ENCODE measurements at regions of chr12 and their contacts with region 1.

Region 1: DNA sequence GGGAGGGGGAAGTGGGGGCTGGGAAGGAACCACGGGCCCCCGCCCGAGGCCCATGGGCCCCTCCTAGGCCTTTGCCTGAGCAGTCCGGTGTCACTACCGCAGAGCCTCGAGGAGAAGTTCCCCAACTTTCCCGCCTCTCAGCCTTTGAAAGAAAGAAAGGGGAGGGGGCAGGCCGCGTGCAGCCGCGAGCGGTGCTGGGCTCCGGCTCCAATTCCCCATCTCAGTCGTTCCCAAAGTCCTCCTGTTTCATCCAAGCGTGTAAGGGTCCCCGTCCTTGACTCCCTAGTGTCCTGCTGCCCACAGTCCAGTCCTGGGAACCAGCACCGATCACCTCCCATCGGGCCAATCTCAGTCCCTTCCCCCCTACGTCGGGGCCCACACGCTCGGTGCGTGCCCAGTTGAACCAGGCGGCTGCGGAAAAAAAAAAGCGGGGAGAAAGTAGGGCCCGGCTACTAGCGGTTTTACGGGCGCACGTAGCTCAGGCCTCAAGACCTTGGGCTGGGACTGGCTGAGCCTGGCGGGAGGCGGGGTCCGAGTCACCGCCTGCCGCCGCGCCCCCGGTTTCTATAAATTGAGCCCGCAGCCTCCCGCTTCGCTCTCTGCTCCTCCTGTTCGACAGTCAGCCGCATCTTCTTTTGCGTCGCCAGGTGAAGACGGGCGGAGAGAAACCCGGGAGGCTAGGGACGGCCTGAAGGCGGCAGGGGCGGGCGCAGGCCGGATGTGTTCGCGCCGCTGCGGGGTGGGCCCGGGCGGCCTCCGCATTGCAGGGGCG is at the start of gene GAPDH:
- DNase-seq: peak; percentile 96 to 98
- H3K4me3 ChIP-seq: peak within 1 kb of the TSS; percentile 97
- H3K27ac ChIP-seq: peak within 1 kb of the TSS; percentile 83
- H3K4me1 ChIP-seq: peaks cover 56% of the 10 kb centered on the region
- H3K27me3 ChIP-seq: no peaks in the 10 kb centered on the region
- CTCF ChIP-seq: no peak
- total RNA-seq, gene GAPDH: 6,143 and 8,169 TPM in 2 replicates

Region 2: GRCh38 chr12:6215932-6216494 is 318.1 kb before region 1 on chr12:
- CTCF ChIA-PET with region 1: no interaction called
- POLR2A ChIA-PET with region 1: no interaction called
- intact Hi-C with region 1: loop called (anchors 10 kb)
- DNase-seq: peak; percentile 99 to 100
- H3K4me3 ChIP-seq: peak overlapping the region; percentile 32; the same call in 1 of the 2 replicates
- H3K27ac ChIP-seq: peak overlapping the region; percentile 95
- H3K4me1 ChIP-seq: peaks cover 86% of the 10 kb centered on the region
- H3K27me3 ChIP-seq: no peaks in the 10 kb centered on the region
- CTCF ChIP-seq: no peak

Region 3: GRCh38 chr12:6335451-6336078 is 198.5 kb before region 1 on chr12:
- CTCF ChIA-PET with region 1: interaction called, 3 read pairs
- POLR2A ChIA-PET with region 1: interaction called, 22 read pairs
- intact Hi-C with region 1: loop called (anchors 1 kb)
- DNase-seq: peak; percentile 76
- H3K4me3 ChIP-seq: peak overlapping the region; percentile 49
- H3K27ac ChIP-seq: peak overlapping the region; percentile 95
- H3K4me1 ChIP-seq: peaks cover 82% of the 10 kb centered on the region
- H3K27me3 ChIP-seq: no peaks in the 10 kb centered on the region
- CTCF ChIP-seq: peak; percentile 53; the same call in 1 of the 2 replicates

Region 4: DNA sequence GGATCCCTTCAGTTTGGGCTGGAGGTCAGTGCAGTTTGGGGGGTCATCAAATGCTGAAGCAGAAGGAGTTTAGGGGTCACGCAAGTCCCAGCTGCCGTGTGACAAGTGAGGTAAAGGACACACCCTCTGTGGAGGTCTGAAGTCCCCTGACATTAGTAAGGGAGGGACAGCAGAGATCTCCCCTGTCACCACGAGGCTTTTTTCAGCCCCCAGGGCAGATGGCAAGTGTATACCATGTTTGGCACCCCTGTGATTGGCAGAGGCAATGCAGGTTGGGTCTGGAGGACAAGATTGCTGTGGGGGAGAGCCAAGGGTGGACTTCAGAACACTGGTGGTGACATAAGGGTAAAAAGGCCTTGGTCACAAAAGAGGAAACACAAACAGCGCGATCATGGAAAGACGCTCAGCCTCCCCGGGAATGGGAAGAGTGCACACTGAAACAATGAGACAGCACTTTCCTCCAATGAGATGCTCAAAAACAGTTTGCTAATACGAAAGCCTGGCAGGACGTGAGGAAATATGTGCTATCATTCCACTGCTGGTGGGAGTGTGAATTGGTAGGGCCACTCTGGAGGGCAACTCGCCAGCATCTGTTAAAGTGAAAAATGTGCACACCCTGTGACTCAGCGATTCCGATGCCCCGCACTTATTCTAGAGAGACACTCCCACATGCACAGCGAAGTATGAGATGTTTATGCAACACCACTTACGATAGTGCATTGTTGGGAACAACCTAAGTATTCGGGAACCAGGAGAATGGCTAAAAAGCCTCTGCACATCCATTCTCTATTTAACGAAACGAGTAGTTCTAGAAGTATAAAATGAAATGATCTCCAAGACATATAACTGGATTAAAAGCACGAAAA is 103.8 kb before region 1 on chr12:
- CTCF ChIA-PET with region 1: no interaction called
- POLR2A ChIA-PET with region 1: no interaction called
- intact Hi-C with region 1: loop called (anchors 1 kb)
- DNase-seq: peak; percentile 97 to 98
- H3K4me3 ChIP-seq: peak overlapping the region; percentile 37
- H3K27ac ChIP-seq: peak overlapping the region; percentile 98
- H3K4me1 ChIP-seq: peaks cover 29% of the 10 kb centered on the region
- H3K27me3 ChIP-seq: no peaks in the 10 kb centered on the region
- CTCF ChIP-seq: no peak

Region 5: DNA sequence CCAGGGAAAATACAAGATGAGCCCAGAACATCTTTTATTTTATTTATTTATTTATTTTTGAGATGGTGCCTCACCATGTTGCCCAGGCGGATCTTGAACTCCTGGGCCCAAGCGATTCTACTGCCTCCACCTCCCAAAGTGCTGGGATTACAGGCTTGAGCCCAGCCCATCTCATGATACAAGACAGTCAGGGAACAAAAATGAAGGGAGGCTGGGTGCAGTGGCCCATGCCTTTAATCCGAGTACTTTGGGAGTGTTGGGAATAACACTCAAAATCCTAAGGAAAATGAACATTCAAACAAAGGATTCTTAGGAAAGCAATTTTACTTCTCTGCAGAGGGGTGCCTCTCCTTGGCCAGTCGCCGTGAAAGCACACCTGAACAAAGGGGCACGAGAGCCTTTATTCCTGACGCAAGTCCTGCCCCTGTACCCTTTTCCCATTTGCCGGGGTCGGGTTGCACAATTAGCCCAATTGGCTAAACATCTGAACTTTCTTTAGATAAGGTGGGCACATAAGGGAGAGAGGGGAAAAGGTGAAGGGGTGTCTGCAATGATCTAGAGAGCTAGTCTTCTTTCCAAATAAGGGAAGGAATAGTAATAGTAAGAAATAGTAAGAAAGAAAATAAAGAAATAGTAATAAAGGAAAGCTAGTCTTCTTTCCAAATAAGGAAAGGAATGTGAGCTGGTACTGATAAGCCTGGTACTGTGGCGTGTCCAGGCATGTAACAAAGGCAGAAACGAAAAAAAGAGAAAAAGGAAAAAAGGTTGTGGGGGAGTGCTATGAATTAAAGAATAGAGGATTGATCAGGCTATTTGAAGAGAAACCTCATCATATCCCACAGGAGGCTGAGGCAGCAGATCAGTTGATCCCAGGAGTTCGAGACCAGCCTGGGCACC is 26.8 kb before region 1 on chr12:
- CTCF ChIA-PET with region 1: interaction called, 4 read pairs
- POLR2A ChIA-PET with region 1: interaction called, 13 read pairs
- intact Hi-C with region 1: no loop called
- DNase-seq: no peak
- H3K4me3 ChIP-seq: no peak overlapping the region
- H3K27ac ChIP-seq: no peak overlapping the region
- H3K4me1 ChIP-seq: no peaks in the 10 kb centered on the region
- H3K27me3 ChIP-seq: no peaks in the 10 kb centered on the region
- CTCF ChIP-seq: no peak

Region 6: DNA sequence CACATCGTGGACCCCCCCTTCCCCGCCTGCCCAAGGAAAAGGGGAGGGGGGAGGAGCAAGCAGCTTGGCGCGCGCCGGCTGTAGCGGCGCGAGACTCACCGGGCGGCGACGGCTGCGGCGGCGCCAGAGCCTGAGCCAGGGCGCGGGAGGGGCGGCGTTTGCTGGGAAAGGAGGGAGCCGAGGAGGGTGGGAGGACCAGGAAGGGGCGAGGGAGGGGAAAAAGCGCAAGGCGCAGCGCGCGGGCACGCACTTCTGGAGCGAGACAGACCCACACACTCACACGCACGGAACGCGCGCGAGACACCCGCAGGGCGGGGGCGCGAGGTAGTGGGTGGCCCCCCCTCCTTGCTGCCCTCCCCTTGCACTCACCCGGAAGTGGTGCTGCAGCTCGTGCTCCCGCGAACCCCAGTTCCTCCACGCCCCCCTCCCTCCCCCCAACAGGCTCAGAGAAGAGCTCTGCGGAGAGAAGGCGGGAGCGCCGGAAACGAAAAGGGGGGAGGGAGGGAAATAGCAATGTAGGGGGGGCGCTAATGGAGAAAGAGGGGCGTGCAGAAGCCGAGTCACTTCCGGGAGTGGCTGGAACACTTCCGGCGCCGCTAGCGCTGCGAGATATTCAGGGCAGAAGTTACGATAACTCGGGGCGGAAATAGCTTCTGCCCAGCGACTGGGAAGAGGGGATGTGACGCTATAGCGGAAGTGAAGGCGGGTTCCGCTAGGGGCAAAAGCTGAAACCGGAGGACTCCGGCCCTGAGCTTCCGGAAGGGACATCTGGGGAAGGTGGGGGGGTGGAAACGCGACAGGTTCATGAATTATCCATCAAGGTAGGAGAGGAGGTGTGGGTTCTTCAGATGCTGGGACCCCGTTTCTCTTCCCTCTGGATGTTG is 155.1 kb after region 1 on chr12 and contains the start of gene ZNF384:
- CTCF ChIA-PET with region 1: no interaction called
- POLR2A ChIA-PET with region 1: interaction called, 33 read pairs
- intact Hi-C with region 1: no loop called
- DNase-seq: peak; percentile 98 to 99
- H3K4me3 ChIP-seq: peak within 1 kb of the TSS; percentile 72
- H3K27ac ChIP-seq: peak within 1 kb of the TSS; percentile 84
- H3K4me1 ChIP-seq: peaks cover 27% of the 10 kb centered on the region
- H3K27me3 ChIP-seq: no peaks in the 10 kb centered on the region
- CTCF ChIP-seq: no peak
- total RNA-seq, gene ZNF384: 74.3 and 106 TPM in 2 replicates

Region 7: GRCh38 chr12:7144414-7145120 is 610.5 kb after region 1 on chr12:
- CTCF ChIA-PET with region 1: no interaction called
- POLR2A ChIA-PET with region 1: no interaction called
- intact Hi-C with region 1: no loop called
- DNase-seq: no peak
- H3K4me3 ChIP-seq: no peak overlapping the region
- H3K27ac ChIP-seq: no peak overlapping the region
- H3K4me1 ChIP-seq: no peaks in the 10 kb centered on the region
- H3K27me3 ChIP-seq: no peaks in the 10 kb centered on the region
- CTCF ChIP-seq: peak; percentile 81

Measured in PC-9 (cell line).